Activated naive CD4-positive, alpha-beta T cell treated with anti-CD3 and anti-CD28 coated beads for 36 hours (primary cell): ENCODE measurements at regions of chr3 and their contacts with region 1.

Region 1: GRCh38 chr3:44114142-44114541 is 127.5 kb upstream of the TOPAZ1 start:
- DNase-seq: peak; percentile 67
- H3K4me3 Mint-ChIP-seq: no peak overlapping the region
- H3K27ac Mint-ChIP-seq: no peak overlapping the region
- H3K4me1 Mint-ChIP-seq: no peaks in the 10 kb centered on the region
- H3K27me3 Mint-ChIP-seq: peaks cover 6% of the 10 kb centered on the region

Region 2: GRCh38 chr3:43855674-43856299 is 258.4 kb before region 1 on chr3:
- CTCF ChIA-PET with region 1: interaction called, 5 read pairs
- intact Hi-C with region 1: loop called (anchors 10 kb)
- DNase-seq: peak; percentile 71
- H3K4me3 Mint-ChIP-seq: no peak overlapping the region
- H3K27ac Mint-ChIP-seq: no peak overlapping the region
- H3K4me1 Mint-ChIP-seq: peaks cover 2% of the 10 kb centered on the region
- H3K27me3 Mint-ChIP-seq: peaks cover 46% of the 10 kb centered on the region

Region 3: DNA sequence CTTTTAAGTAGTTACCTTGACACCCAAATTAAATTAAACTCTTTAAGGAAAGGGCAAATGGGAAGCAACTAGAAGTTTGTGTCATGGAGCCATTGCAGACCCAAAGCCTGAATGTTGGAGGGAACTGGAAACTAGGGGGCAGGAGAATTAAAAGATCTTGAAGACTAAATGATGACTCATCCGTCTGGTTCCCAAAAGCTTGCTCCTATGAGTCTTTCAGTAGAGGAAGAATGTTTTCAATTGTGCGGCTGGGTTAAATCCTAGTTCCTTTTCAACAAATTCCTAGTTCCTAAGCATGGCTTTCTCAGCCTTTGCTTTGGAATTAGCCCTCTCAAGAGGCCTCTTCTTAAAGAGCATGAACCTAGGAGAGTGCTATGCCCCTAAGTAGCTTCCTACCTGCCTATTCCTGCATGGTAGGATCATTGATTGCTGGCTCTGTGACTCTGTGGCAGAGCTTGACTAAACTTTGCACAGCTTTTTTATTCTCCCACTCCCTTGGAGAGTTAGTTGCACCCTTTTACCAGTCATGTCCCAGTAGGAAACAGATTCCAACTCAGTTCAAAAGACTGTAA is 929.7 kb after region 1 on chr3:
- CTCF ChIA-PET with region 1: no interaction called
- intact Hi-C with region 1: no loop called
- DNase-seq: no peak
- H3K4me3 Mint-ChIP-seq: no peak overlapping the region
- H3K27ac Mint-ChIP-seq: no peak overlapping the region
- H3K4me1 Mint-ChIP-seq: peaks cover 20% of the 10 kb centered on the region
- H3K27me3 Mint-ChIP-seq: peaks cover 6% of the 10 kb centered on the region